Activated CD8-positive, alpha-beta T cell treated with anti-CD3 and anti-CD28 coated beads, Interleukin-2, amount 10 ng/mL, durations not matched to agents 7 days and 5 days (primary cell): ENCODE measurements at regions of chr13 and their contacts with region 1.

Region 1: DNA sequence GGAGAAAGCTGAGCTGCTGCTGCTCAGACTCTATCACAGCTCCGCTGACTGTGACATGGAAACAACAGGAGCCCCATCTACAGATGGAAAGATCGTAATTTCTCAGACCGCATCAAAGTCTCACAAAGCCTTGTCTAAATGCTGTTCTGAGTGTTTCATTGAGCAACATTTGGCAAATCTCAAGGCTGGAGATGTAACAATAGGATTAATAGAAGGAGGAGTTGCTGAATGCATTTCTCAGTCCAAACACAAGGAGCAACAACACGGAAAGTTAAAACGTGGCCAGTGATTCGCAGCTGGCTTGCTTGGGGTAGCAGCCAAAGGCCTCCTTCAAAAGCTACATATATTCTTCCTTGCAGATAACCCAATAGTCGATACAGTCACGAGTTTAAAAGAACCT is 55.7 kb downstream of the MRPL57 start:
- DNase-seq: peak; percentile 13
- ATAC-seq: no peak
- H3K4me3 Mint-ChIP-seq: no peak overlapping the region
- H3K27ac Mint-ChIP-seq: no peak overlapping the region
- H3K4me1 Mint-ChIP-seq: peaks cover 16% of the 10 kb centered on the region
- H3K27me3 Mint-ChIP-seq: peaks cover 14% of the 10 kb centered on the region

Region 2: GRCh38 chr13:21202764-21203538 is 29.2 kb before region 1 on chr13:
- CTCF ChIA-PET with region 1: no interaction called
- POLR2A ChIA-PET with region 1: no interaction called
- DNase-seq: no peak
- ATAC-seq: no peak
- H3K4me3 Mint-ChIP-seq: no peak overlapping the region
- H3K27ac Mint-ChIP-seq: no peak overlapping the region
- H3K4me1 Mint-ChIP-seq: no peaks in the 10 kb centered on the region
- H3K27me3 Mint-ChIP-seq: peaks cover 6% of the 10 kb centered on the region

Region 3: GRCh38 chr13:21218351-21219035 is 13.7 kb before region 1 on chr13:
- CTCF ChIA-PET with region 1: interaction called, 10 read pairs
- POLR2A ChIA-PET with region 1: no interaction called
- DNase-seq: peak; percentile 64
- ATAC-seq: peak; percentile 87
- H3K4me3 Mint-ChIP-seq: peak overlapping the region; percentile 22
- H3K27ac Mint-ChIP-seq: peak overlapping the region; percentile 75
- H3K4me1 Mint-ChIP-seq: peaks cover 20% of the 10 kb centered on the region
- H3K27me3 Mint-ChIP-seq: peaks cover 45% of the 10 kb centered on the region